Posterior vena cava (tissue), 2 donors: ENCODE measurements at regions of chr15 and their contacts with region 1.

Region 1: GRCh38 chr15:69885173-69885955 is 212.4 kb downstream of the TLE3 start:
- DNase-seq: no peak

Region 2: GRCh38 chr15:69554256-69554961 is 331.0 kb before region 1 on chr15:
- intact Hi-C with region 1: loop called in 1 of 2 experiments (anchors 5 kb)
- DNase-seq: no peak